SK-N-SH (cell line): ENCODE measurements at regions of chr1 and their contacts with region 1.

Region 1: DNA sequence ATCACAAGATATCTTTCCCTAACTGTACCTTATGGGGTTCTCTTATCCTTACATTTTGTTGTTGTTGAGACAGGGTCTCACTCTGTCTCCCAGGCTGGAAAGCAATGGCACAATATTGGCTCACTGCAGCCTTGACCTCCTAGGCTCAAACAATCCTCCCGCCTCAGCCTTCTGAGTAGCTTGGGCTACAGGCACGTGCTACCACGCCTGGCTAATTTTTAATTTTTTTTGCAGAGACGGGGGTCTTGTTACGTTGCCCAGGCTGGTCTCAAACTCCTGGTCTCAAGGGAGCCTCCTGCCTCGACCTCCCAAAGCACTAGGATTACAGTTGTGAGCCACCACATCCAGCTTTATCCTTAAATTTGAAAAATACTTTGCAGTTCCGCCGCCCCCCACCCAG is 10.4 kb downstream of the RERE start:
- DNase-seq: no peak
- H3K4me3 ChIP-seq: no peak overlapping the region
- H3K27ac ChIP-seq: no peak overlapping the region
- H3K4me1 ChIP-seq: peaks cover 4 to 5% of the 10 kb centered on the region in 2 experiments; a peak in 2 of 4 replicates
- H3K27me3 ChIP-seq: no peaks in the 10 kb centered on the region
- CTCF ChIP-seq: no peak
- EP300 ChIP-seq: no peak
- RAD21 ChIP-seq: no peak

Region 2: GRCh38 chr1:8817406-8818324 is 10.7 kb after region 1 on chr1 and contains the start of gene RERE:
- CTCF ChIA-PET with region 1: interaction called, 11 read pairs
- POLR2A ChIA-PET with region 1: interaction called, 6 read pairs
- DNase-seq: peak; percentile 100
- H3K4me3 ChIP-seq: peak within 1 kb of the TSS; percentile 82 to 90
- H3K27ac ChIP-seq: peak within 1 kb of the TSS; percentile 88 to 95
- H3K4me1 ChIP-seq: peaks cover 17 to 23% of the 10 kb centered on the region in 2 experiments; a peak in 3 of 4 replicates
- H3K27me3 ChIP-seq: no peaks in the 10 kb centered on the region
- CTCF ChIP-seq: no peak
- EP300 ChIP-seq: no peak
- RAD21 ChIP-seq: no peak
- polyA plus RNA-seq, gene RERE: 4.1 and 8.1 TPM in 2 replicates

Region 3: GRCh38 chr1:8858888-8859706 is 52.1 kb after region 1 on chr1:
- CTCF ChIA-PET with region 1: no interaction called
- POLR2A ChIA-PET with region 1: no interaction called
- DNase-seq: peak; percentile 53
- H3K4me3 ChIP-seq: no peak overlapping the region
- H3K27ac ChIP-seq: peak overlapping the region in 1 of 2 experiments; percentile 75; a peak in 3 of 4 replicates
- H3K4me1 ChIP-seq: no peaks in the 10 kb centered on the region; a peak in 1 of 4 replicates
- H3K27me3 ChIP-seq: no peaks in the 10 kb centered on the region
- CTCF ChIP-seq: peak; percentile 69
- EP300 ChIP-seq: no peak
- RAD21 ChIP-seq: peak; percentile 61

Region 4: DNA sequence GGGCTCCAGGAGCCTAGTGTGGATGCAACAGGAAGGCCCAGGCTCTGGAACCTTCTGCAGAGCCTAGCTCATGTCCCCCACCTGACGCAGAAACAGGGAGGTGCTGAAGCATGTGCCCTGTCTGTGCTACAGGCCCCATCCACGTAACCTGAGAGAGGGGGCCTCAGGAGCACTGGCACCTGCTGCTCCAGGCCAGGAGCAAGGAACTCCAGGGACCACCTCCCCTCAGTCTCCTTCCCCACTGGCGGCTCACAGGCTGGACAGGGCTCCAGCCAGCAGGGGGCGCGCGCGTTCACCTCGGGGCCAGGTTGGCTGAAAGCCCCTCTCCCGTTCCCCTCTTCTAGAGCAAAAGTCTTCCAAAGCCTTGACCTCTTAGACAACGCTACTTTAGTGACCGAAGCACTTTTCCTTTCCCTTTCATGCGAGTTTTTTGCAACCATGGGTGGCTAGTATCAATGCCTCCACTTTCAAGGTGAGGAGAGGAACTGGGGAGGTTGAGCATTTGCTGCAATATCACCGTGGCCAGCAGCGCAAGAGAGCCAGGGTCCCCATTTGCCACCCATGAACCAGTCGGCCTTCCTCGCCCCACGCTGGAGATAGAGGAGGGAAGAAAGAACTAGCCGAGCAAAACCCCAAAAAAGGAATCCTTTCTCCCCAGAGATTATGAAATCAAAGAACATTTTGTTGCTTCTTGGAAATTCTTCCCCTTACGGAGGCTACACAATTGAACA is 374.3 kb after region 1 on chr1:
- CTCF ChIA-PET with region 1: no interaction called
- POLR2A ChIA-PET with region 1: no interaction called
- DNase-seq: peak; percentile 86
- H3K4me3 ChIP-seq: peak overlapping the region; percentile 75 to 87
- H3K27ac ChIP-seq: peak overlapping the region; percentile 77 to 89
- H3K4me1 ChIP-seq: peaks cover 0 to 32% of the 10 kb centered on the region in 2 experiments; a peak in 1 of 4 replicates
- H3K27me3 ChIP-seq: no peaks in the 10 kb centered on the region
- CTCF ChIP-seq: peak; percentile 92
- EP300 ChIP-seq: no peak
- RAD21 ChIP-seq: peak; percentile 31; the same call in 1 of the 2 replicates